ENCODE measurements at regions of chr1 and their contacts with region 1.

Region 1: GRCh38 chr1:231240883-231241735 is at the start of gene GNPAT:
- DNase-seq: peak; percentile 87
- H3K4me3 ChIP-seq: peak within 1 kb of the TSS; percentile 57 to 97 (median 94)
- H3K27ac ChIP-seq: peak within 1 kb of the TSS; percentile 59
- H3K4me1 ChIP-seq: peaks cover 19% of the 10 kb centered on the region
- H3K27me3 ChIP-seq: no peaks in the 10 kb centered on the region
- CTCF ChIP-seq: no peak
- POLR2A ChIP-seq: peak; percentile 94
- total RNA-seq, gene GNPAT: 44.1 and 51.4 TPM in 2 replicates

Region 2: GRCh38 chr1:231272880-231273279 is 31.8 kb after region 1 on chr1:
- CTCF ChIA-PET with region 1: no interaction called
- POLR2A ChIA-PET with region 1: no interaction called
- dilution Hi-C with region 1: no loop called
- intact Hi-C with region 1: loop called (anchors 1 kb)
- DNase-seq: peak; percentile 85
- H3K4me3 ChIP-seq: no peak overlapping the region
- H3K27ac ChIP-seq: peak overlapping the region; percentile 74
- H3K4me1 ChIP-seq: peaks cover 21% of the 10 kb centered on the region
- H3K27me3 ChIP-seq: no peaks in the 10 kb centered on the region
- CTCF ChIP-seq: no peak
- POLR2A ChIP-seq: no peak

Region 3: GRCh38 chr1:231279081-231279480 is 38.0 kb after region 1 on chr1:
- CTCF ChIA-PET with region 1: no interaction called
- POLR2A ChIA-PET with region 1: no interaction called
- dilution Hi-C with region 1: no loop called
- intact Hi-C with region 1: loop called (anchors 1 kb)
- DNase-seq: peak; percentile 76
- H3K4me3 ChIP-seq: no peak overlapping the region
- H3K27ac ChIP-seq: peak overlapping the region; percentile 34
- H3K4me1 ChIP-seq: peaks cover 18% of the 10 kb centered on the region
- H3K27me3 ChIP-seq: no peaks in the 10 kb centered on the region
- CTCF ChIP-seq: no peak
- POLR2A ChIP-seq: no peak

Region 4: GRCh38 chr1:231337472-231338269 is 96.6 kb after region 1 on chr1 and contains the start of gene EXOC8:
- CTCF ChIA-PET with region 1: interaction called, 7 read pairs
- POLR2A ChIA-PET with region 1: interaction called, 3 read pairs
- dilution Hi-C with region 1: no loop called
- intact Hi-C with region 1: loop called (anchors 1 kb)
- DNase-seq: peak; percentile 100
- H3K4me3 ChIP-seq: peak within 1 kb of the TSS; percentile 36 to 89 (median 70)
- H3K27ac ChIP-seq: peak within 1 kb of the TSS; percentile 90
- H3K4me1 ChIP-seq: peaks cover 47% of the 10 kb centered on the region
- H3K27me3 ChIP-seq: no peaks in the 10 kb centered on the region
- CTCF ChIP-seq: peak in 1 of 2 donors; percentile 4
- POLR2A ChIP-seq: peak; percentile 77
- total RNA-seq, gene EXOC8: 12.6 and 13.2 TPM in 2 replicates

Region 5: GRCh38 chr1:231590453-231591198 is 349.5 kb after region 1 on chr1:
- CTCF ChIA-PET with region 1: no interaction called
- POLR2A ChIA-PET with region 1: no interaction called
- dilution Hi-C with region 1: no loop called
- intact Hi-C with region 1: loop called (anchors 1 kb)
- DNase-seq: peak; percentile 78
- H3K4me3 ChIP-seq: no peak overlapping the region
- H3K27ac ChIP-seq: no peak overlapping the region
- H3K4me1 ChIP-seq: no peaks in the 10 kb centered on the region
- H3K27me3 ChIP-seq: no peaks in the 10 kb centered on the region
- CTCF ChIP-seq: peak; percentile 69 to 81
- POLR2A ChIP-seq: no peak

Measured in endothelial cell of umbilical vein (primary cell).